Activated naive CD4-positive, alpha-beta T cell treated with anti-CD3 and anti-CD28 coated beads for 36 hours (primary cell): ENCODE measurements at regions of chr6 and their contacts with region 1.

Region 1: DNA sequence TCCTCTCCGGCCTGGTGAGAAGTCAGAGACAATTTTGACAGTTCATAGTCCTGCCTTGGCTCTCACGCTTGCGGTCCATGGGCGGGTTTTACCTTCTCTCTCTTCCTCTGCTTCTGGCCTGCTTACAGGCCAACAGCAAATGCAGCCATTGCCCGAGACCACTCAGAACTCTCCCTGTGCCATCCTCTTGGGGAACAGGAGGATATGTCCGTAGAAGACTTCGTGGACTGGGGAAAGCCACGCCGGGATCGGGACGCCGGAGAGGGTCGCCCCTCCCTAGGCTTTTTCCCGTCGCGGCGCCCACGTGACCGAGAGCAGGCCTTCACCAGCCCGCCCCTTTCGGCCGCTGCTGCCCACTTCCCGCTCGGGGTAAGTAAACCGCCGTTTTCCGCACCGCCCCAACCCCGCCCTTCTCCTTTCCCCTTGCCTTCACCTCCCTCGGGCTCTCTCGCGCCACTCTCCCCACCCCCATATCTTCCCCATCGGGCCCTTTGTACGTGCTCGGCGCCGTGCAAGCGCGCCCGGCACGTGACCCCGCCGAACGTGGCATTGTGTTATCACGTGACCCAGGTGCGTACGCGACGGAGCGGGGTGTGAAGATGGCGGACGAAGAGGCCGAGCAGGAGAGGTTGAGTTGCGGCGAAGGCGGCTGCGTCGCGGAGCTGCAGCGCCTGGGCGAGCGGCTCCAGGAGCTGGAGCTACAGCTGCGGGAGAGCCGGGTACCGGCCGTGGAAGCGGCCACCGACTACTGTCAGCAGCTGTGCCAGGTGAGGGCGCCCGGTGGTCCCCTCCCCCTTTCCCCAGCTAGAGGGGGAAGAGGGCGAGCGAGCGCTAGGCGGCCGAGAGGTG is at the start of gene ZNF292:
- DNase-seq: peak; percentile 98
- H3K4me3 Mint-ChIP-seq: peak within 1 kb of the TSS; percentile 85
- H3K27ac Mint-ChIP-seq: peak within 1 kb of the TSS; percentile 94
- H3K4me1 Mint-ChIP-seq: peaks cover 46% of the 10 kb centered on the region
- H3K27me3 Mint-ChIP-seq: no peaks in the 10 kb centered on the region
- total RNA-seq, gene ZNF292: 39.5 to 41.2 TPM

Region 2: GRCh38 chr6:85642774-85643536 is 1512.3 kb before region 1 on chr6 and contains the start of gene SYNCRIP:
- CTCF ChIA-PET with region 1: no interaction called
- intact Hi-C with region 1: loop called (anchors 1 kb)
- DNase-seq: peak; percentile 98
- H3K4me3 Mint-ChIP-seq: peak within 1 kb of the TSS; percentile 84
- H3K27ac Mint-ChIP-seq: peak within 1 kb of the TSS; percentile 99
- H3K4me1 Mint-ChIP-seq: peaks cover 37% of the 10 kb centered on the region
- H3K27me3 Mint-ChIP-seq: no peaks in the 10 kb centered on the region
- total RNA-seq, gene SYNCRIP: 106 to 109 TPM

Region 3: DNA sequence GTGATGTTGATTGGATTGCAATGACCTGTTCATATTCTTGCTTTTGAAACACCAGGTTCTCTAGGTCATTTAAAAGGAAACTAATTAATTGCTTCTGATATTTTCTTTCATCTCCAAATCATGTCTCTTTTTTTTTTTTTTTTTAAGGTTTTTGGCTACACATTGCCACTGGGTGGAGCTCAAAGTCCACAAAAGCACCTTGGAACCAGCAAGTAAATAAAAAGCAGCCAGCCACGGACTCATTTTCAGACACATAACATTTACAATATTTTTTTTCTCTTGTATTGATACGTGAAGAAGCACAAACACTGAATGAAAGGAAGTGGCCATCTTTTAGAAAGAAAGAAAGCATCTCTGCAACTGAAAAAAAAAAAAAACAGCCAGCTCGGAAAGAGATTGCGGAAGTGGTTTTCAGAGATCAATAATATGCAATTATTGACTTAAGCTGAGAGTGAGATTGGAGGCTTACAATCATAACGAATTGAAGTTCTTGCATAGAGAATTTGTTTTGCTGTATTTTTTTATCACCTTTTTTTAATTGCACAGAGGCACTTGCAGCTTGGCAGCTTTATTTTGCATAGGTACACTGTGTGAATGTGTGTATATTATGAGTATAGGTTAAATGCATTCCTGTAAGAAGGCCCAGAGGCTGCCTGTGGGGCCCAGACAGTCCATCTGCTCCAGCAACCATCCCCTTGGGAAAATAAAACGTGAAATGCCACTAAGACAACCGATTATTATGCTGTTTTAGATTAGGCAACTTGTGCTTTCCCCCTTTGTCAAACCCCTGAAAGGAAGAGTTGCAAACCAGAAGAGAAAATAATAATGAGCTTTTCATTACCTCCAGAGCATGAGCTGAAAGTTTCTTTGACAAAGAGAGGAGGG is 88.5 kb before region 1 on chr6:
- CTCF ChIA-PET with region 1: no interaction called
- intact Hi-C with region 1: no loop called
- DNase-seq: peak; percentile 67
- H3K4me3 Mint-ChIP-seq: no peak overlapping the region
- H3K27ac Mint-ChIP-seq: no peak overlapping the region
- H3K4me1 Mint-ChIP-seq: no peaks in the 10 kb centered on the region
- H3K27me3 Mint-ChIP-seq: peaks cover 8% of the 10 kb centered on the region

Region 4: DNA sequence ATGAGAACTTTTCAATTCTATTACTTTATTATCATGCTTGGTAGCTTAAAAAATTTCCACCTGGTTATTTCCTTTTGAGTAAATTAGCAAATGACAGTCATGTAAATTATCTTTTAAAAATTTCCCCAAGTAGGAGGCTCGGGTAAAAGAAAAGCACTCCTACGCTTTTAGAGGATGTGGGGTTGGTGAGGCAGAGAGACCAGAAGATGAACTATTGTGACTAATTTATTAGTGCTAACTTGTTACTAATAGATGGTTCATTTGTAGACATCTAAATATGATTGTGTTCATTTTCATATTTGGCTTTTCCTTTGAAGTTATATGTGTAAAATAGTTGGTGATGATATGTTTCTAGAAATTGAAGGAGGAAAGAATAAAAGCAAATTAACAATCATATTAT is 27.1 kb after region 1 on chr6:
- CTCF ChIA-PET with region 1: interaction called, 5 read pairs
- intact Hi-C with region 1: loop called (anchors 1 kb)
- DNase-seq: peak; percentile 55
- H3K4me3 Mint-ChIP-seq: peak overlapping the region; percentile 51
- H3K27ac Mint-ChIP-seq: peak overlapping the region; percentile 91
- H3K4me1 Mint-ChIP-seq: peaks cover 79% of the 10 kb centered on the region
- H3K27me3 Mint-ChIP-seq: no peaks in the 10 kb centered on the region

Region 5: GRCh38 chr6:87237804-87238203 is 82.6 kb after region 1 on chr6:
- CTCF ChIA-PET with region 1: interaction called, 7 read pairs
- intact Hi-C with region 1: loop called (anchors 1 kb)
- DNase-seq: no peak
- H3K4me3 Mint-ChIP-seq: no peak overlapping the region
- H3K27ac Mint-ChIP-seq: no peak overlapping the region
- H3K4me1 Mint-ChIP-seq: peaks cover 4% of the 10 kb centered on the region
- H3K27me3 Mint-ChIP-seq: no peaks in the 10 kb centered on the region

Region 6: DNA sequence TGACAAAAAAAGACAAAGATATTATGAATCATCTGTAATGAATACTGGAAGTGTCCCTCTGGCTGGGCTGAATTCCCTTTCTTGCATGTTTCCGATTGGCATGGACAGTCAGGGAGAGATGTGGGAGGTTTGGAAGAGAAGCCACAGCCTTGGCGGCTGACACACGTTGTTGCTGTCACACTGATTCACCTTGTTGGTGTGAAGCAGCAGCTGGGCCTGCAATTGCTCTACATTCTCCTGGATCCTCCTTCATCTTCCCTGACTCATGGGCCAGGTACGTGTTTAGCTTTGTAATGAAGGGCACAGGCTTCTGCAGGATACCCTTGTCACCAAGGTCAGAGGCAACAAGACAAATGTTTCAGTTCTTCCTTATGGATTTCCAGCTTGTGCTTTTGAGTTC is 153.8 kb after region 1 on chr6:
- CTCF ChIA-PET with region 1: no interaction called
- intact Hi-C with region 1: no loop called
- DNase-seq: no peak
- H3K4me3 Mint-ChIP-seq: no peak overlapping the region
- H3K27ac Mint-ChIP-seq: no peak overlapping the region
- H3K4me1 Mint-ChIP-seq: no peaks in the 10 kb centered on the region
- H3K27me3 Mint-ChIP-seq: peaks cover 6% of the 10 kb centered on the region

Region 7: DNA sequence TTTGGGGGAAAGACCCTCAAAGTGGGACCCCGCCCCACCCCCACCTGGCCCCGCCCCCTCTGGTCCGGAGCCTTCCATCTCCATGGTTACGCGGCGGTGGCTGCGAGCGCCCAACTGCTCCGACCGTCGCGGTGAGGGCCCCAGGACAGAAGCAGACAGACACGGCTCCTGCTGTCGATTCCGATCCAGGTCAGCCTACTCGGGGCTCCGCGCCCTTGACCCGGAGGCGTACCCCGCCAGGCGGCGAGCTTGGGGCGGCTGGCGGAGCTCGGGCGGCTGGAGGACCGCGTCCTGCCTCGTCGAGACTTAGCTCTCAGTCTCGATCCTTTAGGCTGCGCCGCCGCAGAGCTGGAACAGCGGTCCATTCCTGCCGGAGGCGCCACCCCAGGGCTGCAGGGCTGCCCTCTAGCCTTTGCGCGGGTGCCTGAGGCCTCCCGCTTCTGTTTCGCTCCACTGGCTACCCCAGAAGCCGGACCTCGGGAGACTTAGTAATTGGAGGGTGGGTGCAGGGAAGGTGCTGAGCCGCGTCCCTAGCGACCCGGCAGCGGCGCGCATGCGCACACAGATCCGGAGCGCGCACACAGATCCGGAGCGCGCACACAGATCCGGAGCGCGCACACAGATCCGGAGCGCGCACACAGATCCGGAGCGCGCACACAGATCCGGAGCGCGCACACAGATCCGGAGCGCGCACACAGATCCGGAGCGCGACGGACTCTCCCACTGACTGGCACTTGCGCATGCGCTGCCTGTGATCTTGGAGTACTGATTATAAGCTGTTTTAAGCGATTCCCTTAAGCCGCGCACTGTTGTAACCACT is 252.9 kb after region 1 on chr6 and contains the start of gene CFAP206:
- CTCF ChIA-PET with region 1: no interaction called
- intact Hi-C with region 1: loop called (anchors 1 kb)
- DNase-seq: peak; percentile 81
- H3K4me3 Mint-ChIP-seq: peak within 1 kb of the TSS; percentile 84
- H3K27ac Mint-ChIP-seq: no peak within 1 kb of the TSS
- H3K4me1 Mint-ChIP-seq: no peaks in the 10 kb centered on the region
- H3K27me3 Mint-ChIP-seq: peaks cover 11% of the 10 kb centered on the region
- total RNA-seq, gene CFAP206: not detected

Region 8: DNA sequence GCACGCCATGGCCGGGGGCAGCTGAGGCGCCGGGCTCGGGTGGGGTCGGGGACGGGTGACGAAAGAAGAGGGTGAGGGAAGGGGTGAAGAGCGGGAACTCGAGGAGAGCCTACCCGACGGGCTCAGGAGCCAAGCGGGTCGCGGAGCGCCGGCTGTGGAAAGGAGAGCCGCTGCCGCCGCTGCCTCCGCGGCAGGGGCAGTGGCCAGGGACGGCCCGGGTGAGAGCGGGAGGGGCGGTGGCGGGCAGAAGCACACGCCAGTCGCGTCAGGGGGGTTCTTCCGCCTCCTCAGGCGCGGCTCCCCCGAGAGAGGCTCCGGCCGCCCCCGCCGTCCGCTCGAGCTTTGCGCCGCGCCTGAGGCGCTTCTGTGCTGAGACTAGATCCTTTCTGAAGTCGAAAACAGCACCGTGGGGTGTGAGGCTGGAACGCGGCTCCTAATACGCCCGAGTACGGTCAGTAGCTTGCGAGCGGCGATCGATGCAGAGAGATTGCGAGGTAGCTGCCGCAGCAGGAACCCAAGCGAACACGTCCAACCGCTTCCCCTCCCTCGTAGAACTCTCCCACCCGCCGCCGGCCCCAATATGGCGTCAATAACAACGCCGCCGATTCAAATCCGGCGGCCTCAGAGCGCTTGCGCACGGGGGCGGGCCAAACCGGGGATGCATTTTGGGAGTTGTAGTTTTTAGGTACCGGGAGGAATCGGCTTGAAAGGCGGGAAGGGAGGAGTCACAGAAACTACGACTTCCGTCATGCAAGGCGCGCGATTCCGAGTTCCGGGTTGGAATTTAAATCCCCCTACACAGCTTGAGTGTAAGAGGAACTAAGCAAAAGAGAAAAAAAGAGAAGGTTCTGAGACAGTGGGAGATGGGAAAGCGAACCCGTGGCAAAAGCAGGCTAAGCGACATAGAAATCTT is 546.7 kb after region 1 on chr6 and contains the start of gene AKIRIN2:
- CTCF ChIA-PET with region 1: no interaction called
- intact Hi-C with region 1: loop called (anchors 1 kb)
- DNase-seq: peak; percentile 97
- H3K4me3 Mint-ChIP-seq: peak within 1 kb of the TSS; percentile 86
- H3K27ac Mint-ChIP-seq: peak within 1 kb of the TSS; percentile 89
- H3K4me1 Mint-ChIP-seq: peaks cover 42% of the 10 kb centered on the region
- H3K27me3 Mint-ChIP-seq: no peaks in the 10 kb centered on the region
- total RNA-seq, gene AKIRIN2: 47.6 to 49.8 TPM